ENCODE measurements at regions of chr15 and their contacts with region 1.

Region 1: DNA sequence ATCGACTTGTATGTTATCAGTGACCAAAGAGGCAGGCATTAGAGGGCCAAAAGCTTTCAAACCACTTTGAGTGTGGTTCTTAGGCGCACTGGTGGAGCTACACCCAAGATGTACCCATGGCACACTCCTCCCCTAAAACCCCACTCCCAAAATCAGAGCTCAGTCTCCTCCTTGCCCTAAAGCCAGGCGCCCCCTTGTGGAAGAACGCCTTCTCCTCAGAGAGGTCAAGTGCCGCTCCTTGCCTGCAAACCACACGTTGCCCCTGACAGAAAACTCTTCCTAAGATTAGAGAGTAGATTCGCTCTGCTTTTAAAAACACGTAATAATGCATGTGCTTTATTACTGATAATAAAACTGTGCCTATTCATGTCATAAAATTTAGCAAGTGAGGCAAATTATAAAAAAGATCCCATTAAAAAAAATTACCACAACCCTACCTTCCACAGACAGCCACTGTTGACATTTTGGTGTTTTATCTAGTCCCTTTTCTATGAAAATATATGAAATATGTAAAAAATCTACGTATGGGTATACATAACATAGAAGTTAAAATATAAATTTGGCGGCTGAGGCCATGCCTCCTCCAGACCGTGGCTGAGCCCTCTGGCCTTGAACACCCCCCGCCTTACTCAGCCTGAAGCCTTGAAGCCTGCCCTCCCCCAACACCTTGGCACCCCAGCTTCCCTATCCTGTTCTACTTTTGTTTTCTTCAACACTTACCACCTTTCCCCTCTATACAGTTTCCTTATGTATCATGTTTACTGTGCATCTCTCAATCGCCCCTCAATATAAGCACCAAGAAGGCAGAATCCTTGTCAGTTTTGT is 33.5 kb downstream of the BCL2L10 start:
- DNase-seq: peak; percentile 89
- ATAC-seq: peak; percentile 70 to 87

Region 2: GRCh38 chr15:51721199-51721960 is 357.7 kb before region 1 on chr15:
- intact Hi-C with region 1: no loop called
- DNase-seq: no peak
- ATAC-seq: peak in 1 of 2 donors; percentile 89

Region 3: GRCh38 chr15:51888593-51889195 is 190.4 kb before region 1 on chr15:
- intact Hi-C with region 1: loop called in 1 of 2 experiments (anchors 2 kb)
- DNase-seq: no peak
- ATAC-seq: peak in 1 of 2 donors; percentile 24

Region 4: DNA sequence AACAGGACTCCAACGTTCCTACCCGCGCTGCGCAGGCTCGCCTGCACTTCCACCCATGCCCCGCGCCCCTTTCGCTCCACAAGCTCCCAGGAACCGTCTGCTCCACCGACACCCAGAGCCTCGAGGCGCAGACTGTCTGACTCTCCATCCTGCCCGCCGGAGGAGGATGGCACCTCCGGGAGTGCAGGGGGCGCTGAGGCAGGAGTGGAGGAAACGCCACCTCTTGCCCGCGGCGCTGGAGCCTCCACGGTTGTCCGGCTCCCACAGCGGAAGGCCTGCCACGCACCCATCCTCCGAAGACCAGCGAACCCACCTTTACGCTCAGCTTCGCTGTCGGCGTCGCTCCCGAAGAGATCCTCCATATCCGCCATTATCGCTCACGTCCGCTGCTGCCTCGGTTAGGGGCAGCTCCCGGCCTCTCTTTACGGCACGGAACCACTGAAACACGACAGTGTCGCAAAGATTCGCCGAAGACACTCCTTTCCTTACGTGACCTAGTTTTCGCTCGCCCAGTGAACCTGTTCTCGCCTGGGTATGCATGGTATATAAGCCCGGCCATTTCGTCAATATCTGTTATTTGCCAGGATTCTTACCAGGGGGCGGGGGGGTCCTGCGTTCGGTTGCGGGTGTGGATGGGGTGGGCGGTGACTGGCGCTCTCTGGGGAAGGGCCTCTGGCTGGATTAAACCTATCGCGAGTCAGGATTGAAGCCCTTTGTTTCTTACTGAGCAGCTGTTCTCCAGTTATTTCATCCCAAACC is 107.5 kb before region 1 on chr15 and contains the start of gene LEO1:
- intact Hi-C with region 1: loop called in 1 of 2 experiments (anchors 2 kb)
- DNase-seq: peak; percentile 93
- ATAC-seq: peak; percentile 94 to 97
- total RNA-seq, gene LEO1: 9.8 to 10.8 TPM

Region 5: GRCh38 chr15:51982013-51982769 is 96.9 kb before region 1 on chr15:
- intact Hi-C with region 1: loop called in 1 of 2 experiments (anchors 10 kb)
- DNase-seq: no peak
- ATAC-seq: peak; percentile 73 to 89